Vagina (tissue), 2 donors: ENCODE measurements at regions of chr1 and their contacts with region 1.

Region 1: DNA sequence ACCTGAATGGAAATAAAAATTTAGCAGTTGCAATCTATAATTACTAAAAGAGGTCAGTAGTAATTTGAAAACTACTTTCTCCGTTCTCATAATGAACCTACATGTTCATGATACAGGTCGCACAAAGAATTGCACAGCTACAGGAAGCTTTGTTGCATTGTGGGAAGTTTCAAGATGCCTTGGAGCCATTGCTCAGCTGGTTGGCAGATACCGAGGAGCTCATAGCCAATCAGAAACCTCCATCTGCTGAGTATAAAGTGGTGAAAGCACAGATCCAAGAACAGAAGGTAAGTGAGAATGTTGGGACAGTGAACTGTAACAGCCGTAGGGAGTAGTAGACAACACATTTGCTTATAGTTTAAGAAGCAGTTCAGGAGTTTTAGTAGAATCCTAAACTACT is 68.8 kb upstream of the BMP8A start:
- DNase-seq: no peak
- H3K4me3 ChIP-seq: no peak overlapping the region
- H3K27ac ChIP-seq: no peak overlapping the region
- H3K4me1 ChIP-seq: peaks cover 31% of the 10 kb centered on the region
- H3K27me3 ChIP-seq: no peaks in the 10 kb centered on the region
- CTCF ChIP-seq: no peak
- POLR2A ChIP-seq: no peak

Region 2: DNA sequence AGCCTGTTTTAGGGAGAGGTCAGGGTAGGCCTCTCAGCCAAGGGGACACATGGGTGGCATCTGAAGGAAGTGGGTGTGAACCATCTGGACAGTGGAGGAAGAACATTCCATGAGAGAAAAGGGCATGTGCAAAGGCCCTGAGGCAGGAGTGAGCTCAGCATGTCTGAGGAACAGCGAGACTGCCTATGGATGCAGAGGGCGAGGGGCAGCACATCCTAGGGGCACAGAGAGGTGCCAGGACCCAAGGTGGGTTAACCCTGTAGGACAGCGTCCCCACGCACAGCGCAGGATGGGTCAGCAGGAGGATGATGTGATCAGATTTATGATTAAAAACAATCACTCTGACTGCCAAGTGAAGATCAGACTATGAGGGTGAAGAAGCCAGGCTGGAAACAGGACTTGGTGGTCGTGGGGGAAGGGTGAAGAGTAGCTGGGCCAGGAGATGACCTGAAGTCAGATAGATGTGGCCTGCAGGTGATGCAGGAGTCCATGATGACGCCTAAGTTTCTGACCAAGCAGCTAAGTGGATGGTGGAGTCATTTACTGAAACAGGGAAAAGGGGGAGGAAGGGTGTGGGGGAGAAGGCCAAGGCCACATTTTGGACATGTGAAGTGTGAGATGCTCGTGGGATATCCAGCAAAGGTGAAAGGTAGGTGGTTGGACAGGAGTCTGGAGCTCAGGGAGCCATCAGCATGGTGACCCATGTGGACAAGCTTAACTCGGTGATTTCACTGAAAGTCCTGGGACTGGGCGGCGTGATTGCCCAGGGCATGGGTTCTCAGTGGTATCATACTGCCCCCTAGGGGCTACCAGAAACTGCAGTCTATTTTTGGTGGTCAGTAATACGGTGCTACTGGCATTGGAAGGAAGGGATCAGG is 116.2 kb after region 1 on chr1:
- intact Hi-C with region 1: loop called (anchors 10 kb)
- DNase-seq: no peak
- H3K4me3 ChIP-seq: no peak overlapping the region
- H3K27ac ChIP-seq: no peak overlapping the region
- H3K4me1 ChIP-seq: no peaks in the 10 kb centered on the region
- H3K27me3 ChIP-seq: no peaks in the 10 kb centered on the region
- CTCF ChIP-seq: peak; percentile 44 to 72 (median 63)
- POLR2A ChIP-seq: no peak